Caco-2 (cell line): ENCODE measurements at regions of chr4 and their contacts with region 1.

Region 1: DNA sequence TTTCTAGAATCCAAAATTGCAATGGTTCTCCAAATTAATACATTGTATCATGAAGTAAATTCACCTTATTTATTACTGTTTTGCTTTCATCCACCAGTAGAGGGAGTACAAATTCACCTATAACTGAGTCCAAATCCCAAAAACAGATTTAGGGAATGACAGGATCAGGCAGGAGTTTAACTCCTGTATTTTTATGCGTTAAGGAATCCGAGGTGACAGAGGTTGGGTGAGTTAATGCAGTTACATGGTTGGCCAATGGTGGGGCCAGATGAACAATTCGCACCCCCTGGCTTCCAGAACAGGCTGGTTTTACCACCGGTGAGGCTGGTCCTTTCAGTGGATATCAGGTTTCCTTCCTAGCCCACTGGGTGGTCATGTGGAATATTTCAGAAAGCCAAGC is 82.4 kb downstream of the MTNR1A start:
- DNase-seq: no peak
- H3K4me3 ChIP-seq: no peak overlapping the region
- H3K4me3 Mint-ChIP-seq: no peak overlapping the region
- H3K27ac Mint-ChIP-seq: no peak overlapping the region
- H3K4me1 ChIP-seq: no peaks in the 10 kb centered on the region
- H3K4me1 Mint-ChIP-seq: no peaks in the 10 kb centered on the region
- H3K27me3 ChIP-seq: no peaks in the 10 kb centered on the region
- H3K27me3 Mint-ChIP-seq: peaks cover 11% of the 10 kb centered on the region
- CTCF ChIP-seq: peak; percentile 30 to 45

Region 2: DNA sequence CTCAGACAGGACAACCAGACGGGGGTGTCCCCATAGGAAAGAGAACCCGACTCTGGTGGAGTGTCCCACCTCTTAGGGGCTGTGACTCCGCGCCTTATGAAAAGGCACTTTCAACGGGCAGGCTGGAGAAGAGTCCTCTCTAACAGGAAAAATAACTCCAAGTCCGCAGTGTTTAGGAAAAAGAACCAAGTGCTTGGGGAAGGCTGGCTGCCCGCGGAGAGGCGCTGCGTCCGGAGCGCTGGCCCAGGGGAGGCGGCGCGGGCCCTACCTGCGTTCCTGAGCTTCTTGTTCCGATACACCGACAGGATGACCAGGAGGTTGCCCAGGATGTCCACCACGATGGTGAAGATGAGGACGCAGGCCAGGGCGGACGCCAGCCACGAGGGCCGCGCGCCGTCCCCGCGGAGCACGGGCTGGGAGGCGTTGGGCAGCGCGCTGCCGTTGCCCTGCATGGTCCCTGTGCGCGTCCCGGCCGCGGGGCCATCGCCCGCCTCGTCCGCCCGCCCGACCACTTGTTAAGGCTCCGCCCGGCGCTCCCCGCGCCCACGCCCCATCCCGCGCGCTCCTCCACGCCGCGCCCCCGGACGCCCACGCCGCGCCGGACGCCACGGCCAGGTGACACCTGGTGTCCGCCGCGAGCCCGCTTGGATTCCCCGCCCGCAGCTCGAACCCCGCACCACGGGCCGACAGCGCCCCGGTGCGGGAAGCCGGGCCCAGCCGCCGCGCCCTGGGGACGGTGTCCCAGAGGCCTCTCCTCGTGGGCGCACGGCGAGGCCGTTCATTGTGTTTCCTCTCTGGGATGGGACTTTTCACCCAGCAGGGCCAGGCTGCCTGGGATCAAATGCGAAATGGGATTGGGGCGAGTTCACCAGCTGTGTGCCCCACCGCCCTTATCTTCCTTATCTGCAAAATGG is 82.2 kb after region 1 on chr4 and contains the start of gene MTNR1A:
- CTCF ChIA-PET with region 1: no interaction called
- POLR2A ChIA-PET with region 1: no interaction called
- intact Hi-C with region 1: loop called (anchors 1 kb)
- DNase-seq: peak in 1 of 2 experiments; percentile 47
- H3K4me3 ChIP-seq: peak within 1 kb of the TSS; percentile 35
- H3K4me3 Mint-ChIP-seq: peak within 1 kb of the TSS; percentile 72
- H3K27ac Mint-ChIP-seq: no peak within 1 kb of the TSS
- H3K4me1 ChIP-seq: no peaks in the 10 kb centered on the region
- H3K4me1 Mint-ChIP-seq: no peaks in the 10 kb centered on the region
- H3K27me3 ChIP-seq: no peaks in the 10 kb centered on the region; the same call in 1 of the 2 replicates
- H3K27me3 Mint-ChIP-seq: peaks cover 28% of the 10 kb centered on the region
- CTCF ChIP-seq: peak; percentile 19 to 27
- total RNA-seq, gene MTNR1A: not detected in 2 replicates

Region 3: DNA sequence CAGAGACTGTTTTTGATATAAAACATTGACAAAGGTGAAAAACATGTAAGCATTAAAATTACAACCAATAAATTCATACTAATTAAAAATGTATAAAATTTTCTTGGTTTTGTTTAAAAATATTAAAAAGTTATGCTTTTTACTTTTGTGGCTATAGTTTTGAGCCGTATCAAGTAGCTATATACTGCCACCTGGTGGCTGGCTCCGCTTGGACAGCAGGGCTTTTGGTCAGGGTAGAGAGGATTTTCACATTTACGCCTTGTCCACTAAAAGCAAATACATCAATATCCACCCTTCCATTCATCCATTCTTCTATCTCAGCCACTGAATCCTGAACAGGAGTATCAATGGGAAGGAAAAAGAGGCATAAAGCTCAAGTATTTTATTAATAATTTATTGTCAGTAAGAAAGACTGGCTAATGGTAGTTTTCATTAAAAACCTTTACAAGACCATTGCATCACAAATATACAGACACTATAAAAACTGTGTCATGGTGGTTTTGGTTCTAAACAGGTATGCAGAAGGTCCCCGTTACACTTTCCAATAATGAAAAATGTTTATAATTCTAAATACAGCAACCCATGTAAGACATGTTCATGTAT is 114.6 kb after region 1 on chr4:
- CTCF ChIA-PET with region 1: interaction called, 3 read pairs
- POLR2A ChIA-PET with region 1: no interaction called
- intact Hi-C with region 1: loop called (anchors 1 kb)
- DNase-seq: peak; percentile 49 to 69
- H3K4me3 ChIP-seq: no peak overlapping the region
- H3K4me3 Mint-ChIP-seq: no peak overlapping the region
- H3K27ac Mint-ChIP-seq: no peak overlapping the region
- H3K4me1 ChIP-seq: no peaks in the 10 kb centered on the region
- H3K4me1 Mint-ChIP-seq: no peaks in the 10 kb centered on the region
- H3K27me3 ChIP-seq: no peaks in the 10 kb centered on the region
- H3K27me3 Mint-ChIP-seq: no peaks in the 10 kb centered on the region
- CTCF ChIP-seq: peak; percentile 73 to 74